H1 (cell line): ENCODE measurements at regions of chr19 and their contacts with region 1.

Region 1: GRCh38 chr19:50431343-50432220 is 1.1 kb upstream of the MYBPC2 start:
- DNase-seq: peak; percentile 66 to 99
- H3K4me3 ChIP-seq: peak overlapping the region; percentile 52 to 74 (median 62)
- H3K27ac ChIP-seq: peak overlapping the region; percentile 62; the same call in 1 of the 2 replicates
- H3K4me1 ChIP-seq: peaks cover 2 to 18% (median 13%) of the 10 kb centered on the region in 4 experiments
- H3K27me3 ChIP-seq: peaks cover 0 to 19% (median 8%) of the 10 kb centered on the region in 4 experiments; a peak in 4 of 7 replicates
- CTCF ChIP-seq: no peak
- EP300 ChIP-seq: peak in 1 of 2 experiments; percentile 37; a peak in 1 of 3 replicates
- POLR2A ChIP-seq: peak in 1 of 2 experiments; percentile 63; a peak in 2 of 3 replicates
- RAD21 ChIP-seq: no peak

Region 2: GRCh38 chr19:50414864-50415660 is 16.5 kb before region 1 on chr19:
- CTCF ChIA-PET with region 1: interaction called, 5 read pairs
- POLR2A ChIA-PET with region 1: interaction called, 16 read pairs
- DNase-seq: peak; percentile 79 to 98
- H3K4me3 ChIP-seq: no peak overlapping the region
- H3K27ac ChIP-seq: no peak overlapping the region; the same call in 1 of the 2 replicates
- H3K4me1 ChIP-seq: peaks cover 0 to 20% (median 12%) of the 10 kb centered on the region in 4 experiments; a peak in 6 of 7 replicates
- H3K27me3 ChIP-seq: peaks cover 0 to 2% (median 0%) of the 10 kb centered on the region in 4 experiments; a peak in 1 of 7 replicates
- CTCF ChIP-seq: peak; percentile 94 to 99 (median 95)
- EP300 ChIP-seq: no peak
- POLR2A ChIP-seq: no peak
- RAD21 ChIP-seq: peak; percentile 65 to 76